OCI-LY7 (cell line): ENCODE measurements at regions of chr16 and their contacts with region 1.

Region 1: DNA sequence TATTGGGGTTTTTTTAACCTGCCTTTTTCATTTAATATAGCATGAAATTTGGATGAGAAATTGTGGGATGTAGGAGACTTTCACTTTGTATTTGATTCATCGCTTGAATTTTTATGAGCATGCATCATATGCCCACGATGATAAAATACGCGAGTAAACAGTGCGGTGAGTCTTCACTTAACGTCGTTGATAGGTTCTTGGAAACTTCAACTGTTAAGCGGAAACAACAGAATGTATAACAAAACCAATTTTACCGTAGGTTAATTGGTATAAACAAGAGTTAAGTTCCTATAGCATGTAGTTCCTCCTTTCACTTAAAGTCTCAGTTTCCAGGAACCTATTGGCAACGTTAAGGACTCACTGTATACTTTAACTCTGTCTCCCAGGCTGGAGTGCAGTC is 28.7 kb downstream of the MMP15 start:
- DNase-seq: no peak
- H3K4me3 ChIP-seq: no peak overlapping the region
- H3K27ac ChIP-seq: no peak overlapping the region
- H3K4me1 ChIP-seq: no peaks in the 10 kb centered on the region
- CTCF ChIP-seq: no peak

Region 2: DNA sequence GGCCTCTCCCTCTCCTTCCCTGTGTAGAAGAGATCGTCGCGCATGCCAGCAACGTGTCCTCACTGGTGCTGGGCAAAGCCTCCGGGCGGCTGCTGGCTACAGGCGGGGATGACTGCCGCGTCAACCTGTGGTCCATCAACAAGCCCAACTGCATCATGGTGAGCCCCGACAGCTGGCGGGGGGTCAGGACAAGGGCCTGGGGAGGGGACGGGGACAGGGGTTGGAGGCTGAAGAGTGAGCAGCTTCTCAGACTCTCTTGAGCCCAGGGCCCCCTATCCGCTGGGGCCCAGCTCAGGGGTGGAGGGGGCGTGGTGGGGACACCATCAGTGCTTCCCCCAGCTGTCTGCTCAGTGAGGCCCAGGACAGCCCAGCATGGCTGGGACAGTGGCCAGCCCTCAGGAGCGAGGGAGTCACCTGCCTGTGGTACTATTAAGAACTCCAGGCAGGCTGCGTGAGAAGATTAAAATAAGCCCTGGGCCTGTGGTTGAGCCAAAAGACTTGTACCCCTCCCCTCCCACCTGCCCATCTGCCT is 312.6 kb before region 1 on chr16:
- CTCF ChIA-PET with region 1: no interaction called
- POLR2A ChIA-PET with region 1: no interaction called
- intact Hi-C with region 1: no loop called
- DNase-seq: no peak
- H3K4me3 ChIP-seq: no peak overlapping the region
- H3K27ac ChIP-seq: no peak overlapping the region
- H3K4me1 ChIP-seq: peaks cover 12% of the 10 kb centered on the region
- CTCF ChIP-seq: no peak

Region 3: GRCh38 chr16:58252716-58253115 is 198.4 kb after region 1 on chr16:
- CTCF ChIA-PET with region 1: no interaction called
- POLR2A ChIA-PET with region 1: interaction called, 10 read pairs
- intact Hi-C with region 1: no loop called
- DNase-seq: peak; percentile 9
- H3K4me3 ChIP-seq: no peak overlapping the region
- H3K27ac ChIP-seq: no peak overlapping the region
- H3K4me1 ChIP-seq: peaks cover 12% of the 10 kb centered on the region
- CTCF ChIP-seq: peak; percentile 63

Region 4: GRCh38 chr16:58767581-58767980 is 713.3 kb after region 1 on chr16:
- CTCF ChIA-PET with region 1: no interaction called
- POLR2A ChIA-PET with region 1: no interaction called
- intact Hi-C with region 1: no loop called
- DNase-seq: no peak
- H3K4me3 ChIP-seq: no peak overlapping the region
- H3K27ac ChIP-seq: no peak overlapping the region
- H3K4me1 ChIP-seq: no peaks in the 10 kb centered on the region
- CTCF ChIP-seq: no peak